Activated T-helper 2 cell treated with anti-CD3 and anti-CD28 coated beads, Interferon-gamma antibody, Interleukin-2, Interleukin-4, amounts not matched to agents 10 μg/mL and 5 μg/mL and 100 μg/mL, durations not matched to agents 14 hours and 24 hours and 36 hours (primary cell): ENCODE measurements at regions of chr3 and their contacts with region 1.

Region 1: DNA sequence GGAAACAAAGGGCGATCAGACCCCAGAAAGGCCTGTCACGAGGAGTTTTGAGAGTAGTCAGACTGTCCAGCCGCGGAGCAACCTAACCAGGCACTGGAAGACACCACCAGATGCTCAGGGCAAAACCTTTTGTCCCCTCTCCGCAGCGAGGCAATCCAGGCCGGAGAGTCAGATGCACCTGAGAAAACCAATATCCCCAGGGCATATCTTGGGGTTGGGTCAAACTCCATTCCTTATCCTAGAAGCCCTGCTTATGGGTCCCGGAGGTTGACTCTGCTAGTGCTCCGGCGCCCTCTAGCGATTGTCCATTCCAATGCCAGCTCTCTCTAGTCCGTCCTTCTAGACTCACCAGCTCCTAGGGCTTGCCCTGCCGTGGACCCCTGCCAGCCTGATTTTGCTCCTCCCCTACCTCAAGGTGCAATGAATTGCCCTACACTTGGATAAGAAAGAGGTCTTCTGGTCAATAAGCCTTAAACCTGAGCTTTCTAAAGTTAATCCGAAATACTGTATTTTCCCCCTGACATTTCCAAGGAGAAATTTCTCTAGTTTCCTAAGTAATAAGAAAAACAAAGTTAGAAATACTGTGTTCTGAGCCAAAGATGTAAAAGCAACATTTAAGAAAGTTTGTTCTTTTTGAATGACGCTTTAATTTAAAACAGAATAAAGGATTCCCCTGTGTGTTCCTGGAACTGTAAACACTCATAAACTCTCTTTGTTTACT is 5.5 kb downstream of the CPNE4 start:
- DNase-seq: peak; percentile 44
- H3K4me3 Mint-ChIP-seq: no peak overlapping the region
- H3K27ac Mint-ChIP-seq: no peak overlapping the region
- H3K4me1 Mint-ChIP-seq: peaks cover 3% of the 10 kb centered on the region
- H3K27me3 Mint-ChIP-seq: peaks cover 34% of the 10 kb centered on the region

Region 2: DNA sequence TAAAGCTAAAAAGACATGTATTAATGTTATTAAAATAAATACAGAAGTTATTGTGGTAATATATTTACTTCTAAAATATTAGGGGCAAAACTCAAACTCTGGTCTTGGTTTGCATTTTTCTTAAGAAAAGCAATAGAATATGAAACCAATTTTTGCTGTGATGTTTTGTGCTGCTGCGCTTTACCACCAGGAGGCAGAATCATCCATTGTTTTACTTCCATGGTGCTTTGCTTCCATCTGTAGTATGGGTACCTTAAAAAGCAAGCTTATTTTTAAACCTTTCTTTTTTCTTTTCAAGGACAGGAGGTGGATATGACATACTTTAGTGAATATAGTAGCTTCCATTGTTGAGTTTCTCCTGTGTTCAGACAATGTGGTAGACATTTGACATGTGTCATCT is 480.0 kb before region 1 on chr3:
- intact Hi-C with region 1: loop called (anchors 1 kb)
- DNase-seq: no peak
- H3K4me3 Mint-ChIP-seq: no peak overlapping the region
- H3K27ac Mint-ChIP-seq: no peak overlapping the region
- H3K4me1 Mint-ChIP-seq: peaks cover 21% of the 10 kb centered on the region
- H3K27me3 Mint-ChIP-seq: peaks cover 43% of the 10 kb centered on the region

Region 3: DNA sequence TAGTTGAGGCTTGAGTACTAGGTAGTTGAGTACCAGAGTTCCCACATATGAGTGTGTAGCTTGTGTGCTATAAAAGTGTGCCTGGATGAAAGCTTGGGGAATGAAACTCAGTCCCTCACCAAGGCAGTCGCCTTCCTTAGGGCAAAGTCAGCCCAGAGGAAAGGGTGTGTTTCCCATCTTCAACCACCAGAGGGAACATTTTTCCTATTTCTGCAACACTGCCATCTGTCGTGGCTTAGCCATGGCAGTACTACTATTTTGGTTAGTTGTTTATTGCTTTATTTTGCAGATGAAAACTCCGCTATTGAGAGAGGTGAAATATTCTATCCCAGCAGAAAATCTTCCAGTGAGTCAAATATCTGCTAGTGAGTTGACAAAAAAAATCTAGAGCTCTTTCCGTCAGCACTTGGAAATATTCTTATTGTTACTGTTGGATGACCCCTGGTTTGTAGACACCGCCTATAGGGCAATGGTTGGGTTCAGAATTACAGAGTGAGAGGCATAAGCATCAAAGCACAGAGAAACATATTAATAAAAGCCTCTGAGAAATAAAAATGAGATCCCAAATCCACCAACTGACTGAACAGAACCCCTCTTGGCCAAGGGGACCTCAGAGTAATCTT is 234.5 kb before region 1 on chr3:
- intact Hi-C with region 1: loop called (anchors 1 kb)
- DNase-seq: no peak
- H3K4me3 Mint-ChIP-seq: no peak overlapping the region
- H3K27ac Mint-ChIP-seq: no peak overlapping the region
- H3K4me1 Mint-ChIP-seq: peaks cover 11% of the 10 kb centered on the region
- H3K27me3 Mint-ChIP-seq: peaks cover 10% of the 10 kb centered on the region

Region 4: GRCh38 chr3:132325103-132325606 is 295.8 kb after region 1 on chr3:
- intact Hi-C with region 1: no loop called
- DNase-seq: no peak
- H3K4me3 Mint-ChIP-seq: no peak overlapping the region
- H3K27ac Mint-ChIP-seq: no peak overlapping the region
- H3K4me1 Mint-ChIP-seq: no peaks in the 10 kb centered on the region
- H3K27me3 Mint-ChIP-seq: peaks cover 7% of the 10 kb centered on the region